ENCODE measurements at regions of chr6 and their contacts with region 1.

Region 1: DNA sequence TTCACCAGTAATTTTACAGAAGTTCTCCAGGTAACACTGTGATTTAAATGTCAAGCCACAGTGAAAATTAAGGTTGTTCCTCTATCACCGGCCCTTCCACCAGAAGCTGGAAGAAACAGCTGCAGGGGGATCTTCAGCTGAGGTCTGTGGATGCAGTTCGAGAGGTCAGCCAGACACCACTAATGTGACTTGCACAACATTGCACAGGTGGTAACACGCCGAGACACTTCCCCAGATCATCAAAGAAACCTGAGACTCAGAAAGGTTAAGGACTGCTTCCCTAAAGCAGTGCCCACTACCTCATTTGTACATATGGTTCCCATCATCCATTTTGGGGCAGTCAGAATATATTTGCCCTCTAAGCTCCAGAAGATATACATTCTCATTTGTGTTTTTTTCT is 8.1 kb upstream of the SERPINB9 start:
- DNase-seq: no peak
- H3K4me3 Mint-ChIP-seq: no peak overlapping the region
- H3K27ac Mint-ChIP-seq: no peak overlapping the region
- H3K4me1 Mint-ChIP-seq: peaks cover 42% of the 10 kb centered on the region
- H3K27me3 Mint-ChIP-seq: peaks cover 1% of the 10 kb centered on the region

Region 2: DNA sequence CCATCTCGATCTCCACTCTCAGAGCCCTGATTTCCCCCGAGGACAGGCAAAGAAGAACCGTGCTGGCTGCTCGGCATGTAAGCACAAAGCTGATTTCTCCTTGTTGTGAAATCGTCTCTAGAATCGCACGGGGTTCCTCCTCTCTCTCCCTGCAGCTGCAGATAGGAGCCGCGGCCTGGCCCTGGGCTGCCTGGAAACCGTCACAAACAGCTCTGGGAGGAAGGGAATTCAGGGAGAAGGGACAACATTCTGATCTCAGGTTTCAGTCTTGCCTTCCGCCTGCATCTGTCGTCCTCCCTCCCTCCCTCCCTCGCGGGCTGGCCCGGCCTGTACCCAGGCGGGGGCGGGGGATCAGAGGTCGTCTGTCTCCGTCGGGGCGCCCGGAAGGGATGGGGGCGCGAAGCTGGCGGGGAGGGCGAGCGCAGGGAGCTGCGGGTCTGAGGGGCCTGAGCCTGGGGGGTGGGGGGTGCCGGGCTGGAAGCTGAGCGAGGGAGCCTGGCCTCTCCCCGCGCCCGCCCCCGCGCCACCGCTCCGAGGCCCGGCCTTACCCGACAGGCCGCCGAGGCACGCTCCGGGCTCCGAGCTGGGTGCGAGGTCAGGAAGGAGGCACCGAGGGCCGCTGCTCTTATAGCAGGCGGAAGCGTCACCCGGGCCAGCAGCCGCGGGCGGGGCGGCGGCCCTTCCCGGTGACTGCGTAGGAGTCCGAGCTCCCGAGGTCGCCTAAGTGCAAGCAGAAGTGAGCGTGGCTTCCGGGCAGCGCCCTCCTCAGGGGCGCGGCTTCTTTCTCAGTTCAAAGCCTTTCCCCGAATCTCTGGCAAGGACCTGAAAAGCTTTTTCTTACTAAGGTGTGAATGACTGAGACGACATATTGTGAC is 69.7 kb before region 1 on chr6 and contains the start of gene SERPINB1:
- intact Hi-C with region 1: loop called (anchors 1 kb)
- DNase-seq: peak; percentile 80
- H3K4me3 Mint-ChIP-seq: peak within 1 kb of the TSS; percentile 96
- H3K27ac Mint-ChIP-seq: peak within 1 kb of the TSS; percentile 93
- H3K4me1 Mint-ChIP-seq: peaks cover 62% of the 10 kb centered on the region
- H3K27me3 Mint-ChIP-seq: no peaks in the 10 kb centered on the region
- total RNA-seq, gene SERPINB1: 79.5 and 80.1 TPM in 2 replicates

Region 3: GRCh38 chr6:2846873-2847224 is 64.3 kb before region 1 on chr6:
- intact Hi-C with region 1: loop called (anchors 1 kb)
- DNase-seq: no peak
- H3K4me3 Mint-ChIP-seq: peak overlapping the region; percentile 31
- H3K27ac Mint-ChIP-seq: peak overlapping the region; percentile 41
- H3K4me1 Mint-ChIP-seq: peaks cover 60% of the 10 kb centered on the region
- H3K27me3 Mint-ChIP-seq: no peaks in the 10 kb centered on the region

Measured in activated T-helper 1 cell treated with anti-CD3 and anti-CD28 coated beads, Interleukin-12 subunit alpha, Interleukin-12 subunit beta, Interleukin-2, Interleukin-4 antibody, amounts not matched to agents 30 ng/mL and 10 ng/mL and 1 ng/mL, durations not matched to agents 14 hours and 24 hours and 36 hours (primary cell).